ENCODE measurements at regions of chr21 and their contacts with region 1.

Region 1: GRCh38 chr21:33324291-33325221 is at the start of gene IFNAR1:
- DNase-seq: peak; percentile 98 to 99
- ATAC-seq: peak; percentile 98 to 100 (median 99)
- H3K4me3 ChIP-seq: peak within 1 kb of the TSS; percentile 67 to 99 (median 93)
- H3K27ac ChIP-seq: peak within 1 kb of the TSS; percentile 92 to 100 (median 99)
- H3K4me1 ChIP-seq: peaks cover 2 to 49% (median 36%) of the 10 kb centered on the region in 9 donors
- H3K27me3 ChIP-seq: no peaks in the 10 kb centered on the region
- CTCF ChIP-seq: no peak
- total RNA-seq, gene IFNAR1: 16.5 to 38.5 (median 23.9) TPM

Region 2: GRCh38 chr21:33229784-33230544 is 94.6 kb before region 1 on chr21 and contains the start of gene IFNAR2:
- intact Hi-C with region 1: loop called in 1 of 10 experiments (anchors 10 kb)
- DNase-seq: peak; percentile 79 to 85
- ATAC-seq: peak; percentile 83 to 98 (median 94)
- H3K4me3 ChIP-seq: peak within 1 kb of the TSS; percentile 78 to 100 (median 96)
- H3K27ac ChIP-seq: peak within 1 kb of the TSS; percentile 91 to 100 (median 99)
- H3K4me1 ChIP-seq: peaks cover 5 to 56% (median 36%) of the 10 kb centered on the region in 9 donors
- H3K27me3 ChIP-seq: no peaks in the 10 kb centered on the region
- CTCF ChIP-seq: peak in 2 of 9 donors; percentile 3 to 6
- total RNA-seq, gene IFNAR2: 6.7 to 22.9 (median 10.4) TPM

Region 3: GRCh38 chr21:33383056-33383888 is 58.7 kb after region 1 on chr21:
- intact Hi-C with region 1: no loop called
- DNase-seq: peak in 1 of 2 donors; percentile 56
- ATAC-seq: peak; percentile 27 to 64 (median 56)
- H3K4me3 ChIP-seq: peak overlapping the region in 9 of 10 donors; percentile 5 to 51 (median 31)
- H3K27ac ChIP-seq: peak overlapping the region in 9 of 10 donors; percentile 16 to 92 (median 64)
- H3K4me1 ChIP-seq: peaks cover 0 to 70% (median 28%) of the 10 kb centered on the region in 9 donors
- H3K27me3 ChIP-seq: no peaks in the 10 kb centered on the region
- CTCF ChIP-seq: no peak